ENCODE measurements at regions of chr4 and their contacts with region 1.

Region 1: GRCh38 chr4:6221851-6222760 is 21.8 kb upstream of the JAKMIP1 start:
- DNase-seq: no peak
- ATAC-seq: peak; percentile 57
- H3K4me3 ChIP-seq: 0 out of 2 replicates have a peak overlapping the region, but pooled peaks have one; percentile 27
- H3K27ac ChIP-seq: no peak overlapping the region
- H3K4me1 ChIP-seq: peaks cover 16% of the 10 kb centered on the region
- H3K27me3 ChIP-seq: no peaks in the 10 kb centered on the region; a peak in 2 of 4 replicates
- CTCF ChIP-seq: no peak
- EP300 ChIP-seq: no peak
- POLR2A ChIP-seq: no peak
- RAD21 ChIP-seq: no peak

Region 2: GRCh38 chr4:6206771-6207290 is 15.3 kb before region 1 on chr4:
- CTCF ChIA-PET with region 1: interaction called, 3 read pairs
- POLR2A ChIA-PET with region 1: interaction called, 4 read pairs
- RAD21 ChIA-PET with region 1: interaction called, 24 read pairs
- SMC1A ChIA-PET with region 1: interaction called, 10 read pairs
- in situ Hi-C with region 1: no loop called
- intact Hi-C with region 1: no loop called
- DNase-seq: no peak
- ATAC-seq: no peak
- H3K4me3 ChIP-seq: no peak overlapping the region
- H3K27ac ChIP-seq: no peak overlapping the region
- H3K4me1 ChIP-seq: peaks cover 8% of the 10 kb centered on the region; the same call in 1 of the 2 replicates
- H3K27me3 ChIP-seq: no peaks in the 10 kb centered on the region; a peak in 1 of 4 replicates
- CTCF ChIP-seq: no peak
- EP300 ChIP-seq: no peak
- POLR2A ChIP-seq: no peak
- RAD21 ChIP-seq: no peak

Region 3: GRCh38 chr4:6239968-6240367 is 17.9 kb after region 1 on chr4:
- CTCF ChIA-PET with region 1: no interaction called
- POLR2A ChIA-PET with region 1: no interaction called
- RAD21 ChIA-PET with region 1: no interaction called
- SMC1A ChIA-PET with region 1: no interaction called
- in situ Hi-C with region 1: no loop called
- intact Hi-C with region 1: no loop called
- DNase-seq: no peak
- ATAC-seq: no peak
- H3K4me3 ChIP-seq: no peak overlapping the region
- H3K27ac ChIP-seq: no peak overlapping the region
- H3K4me1 ChIP-seq: no peaks in the 10 kb centered on the region
- H3K27me3 ChIP-seq: no peaks in the 10 kb centered on the region; a peak in 2 of 4 replicates
- CTCF ChIP-seq: no peak
- EP300 ChIP-seq: no peak
- POLR2A ChIP-seq: no peak
- RAD21 ChIP-seq: no peak